ENCODE measurements at regions of chr11 and their contacts with region 1.

Region 1: DNA sequence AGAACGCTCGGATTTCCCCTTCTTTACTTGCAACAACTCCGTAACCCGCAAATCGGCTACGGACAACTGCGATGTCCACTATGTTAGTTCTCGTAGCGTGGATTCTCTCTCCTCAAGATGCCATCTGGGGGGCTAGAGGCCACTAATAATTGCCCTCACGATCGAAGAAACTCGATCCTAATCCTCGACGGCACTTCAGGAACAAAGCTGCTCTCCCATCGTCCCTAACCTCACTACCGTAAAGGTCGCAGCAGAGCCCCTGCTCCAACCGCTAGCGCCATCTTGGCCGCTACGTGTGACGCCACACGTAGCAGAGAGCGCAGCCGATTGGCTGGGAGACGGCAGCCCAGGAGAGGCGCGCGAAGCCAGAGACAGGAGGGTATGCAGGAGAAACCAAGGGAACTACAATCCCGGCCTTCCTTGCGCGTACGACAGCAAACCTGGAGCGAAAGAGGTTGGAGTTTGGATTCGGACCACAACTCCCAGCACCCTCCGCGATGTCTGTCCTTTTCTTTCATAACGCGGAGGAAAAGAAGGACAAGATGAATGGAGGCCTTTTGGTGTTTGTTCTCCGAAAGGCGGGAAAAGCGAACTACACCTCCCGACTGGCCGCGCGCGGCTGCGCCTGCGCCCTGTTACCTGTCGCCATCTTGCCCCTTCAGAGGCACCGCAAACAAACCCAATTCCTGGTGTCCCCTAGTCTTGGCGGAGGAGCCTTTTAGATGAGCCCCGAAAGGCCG is at the start of gene EMSY:
- DNase-seq: peak; percentile 95
- ATAC-seq: peak; percentile 94
- H3K4me3 Mint-ChIP-seq: peak within 1 kb of the TSS; percentile 96
- H3K27ac Mint-ChIP-seq: peak within 1 kb of the TSS; percentile 94
- H3K4me1 Mint-ChIP-seq: peaks cover 27% of the 10 kb centered on the region
- H3K27me3 Mint-ChIP-seq: no peaks in the 10 kb centered on the region
- total RNA-seq, gene EMSY: 28.5 to 35.4 TPM

Region 2: DNA sequence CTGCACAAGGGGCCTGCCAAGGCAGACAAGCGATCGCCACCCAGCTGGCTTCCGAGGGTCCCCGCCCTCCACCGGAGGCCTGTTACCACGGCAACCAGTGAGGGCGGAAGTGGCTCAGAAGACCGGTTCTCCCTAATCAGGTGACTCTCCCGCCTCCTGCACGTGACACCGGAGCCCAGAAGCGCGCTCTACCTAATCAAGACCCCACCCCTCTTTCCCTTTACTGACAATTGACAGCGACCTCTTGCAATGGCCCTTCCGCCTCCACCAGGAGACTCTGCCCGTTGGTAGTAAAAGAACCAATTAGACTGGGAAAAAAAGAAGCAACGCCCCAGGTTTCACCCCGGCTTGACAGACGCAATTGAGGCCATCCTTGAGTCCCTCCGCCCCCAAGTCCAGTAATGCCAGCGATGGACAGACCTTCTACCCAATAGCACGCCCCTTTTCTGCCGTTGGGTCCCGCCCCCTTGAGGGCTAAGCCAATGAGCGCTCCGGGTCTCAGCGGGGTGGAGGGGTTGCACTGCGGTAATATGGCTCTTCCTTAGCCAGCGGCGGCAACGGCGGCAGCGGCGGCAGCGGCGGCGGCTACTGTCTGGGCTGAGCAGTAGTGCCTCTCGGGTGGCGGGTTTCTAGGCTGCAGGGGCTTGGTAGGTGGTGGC is 629.7 kb before region 1 on chr11 and contains the start of gene UVRAG:
- CTCF ChIA-PET with region 1: no interaction called
- POLR2A ChIA-PET with region 1: no interaction called
- intact Hi-C with region 1: loop called in 1 of 2 experiments (anchors 1 kb)
- DNase-seq: peak; percentile 98
- ATAC-seq: peak; percentile 93
- H3K4me3 Mint-ChIP-seq: no peak within 1 kb of the TSS
- H3K27ac Mint-ChIP-seq: peak within 1 kb of the TSS; percentile 80
- H3K4me1 Mint-ChIP-seq: peaks cover 16% of the 10 kb centered on the region
- H3K27me3 Mint-ChIP-seq: no peaks in the 10 kb centered on the region
- total RNA-seq, gene UVRAG: 11.4 to 13.4 TPM

Region 3: GRCh38 chr11:76235233-76236091 is 209.1 kb before region 1 on chr11:
- CTCF ChIA-PET with region 1: interaction called, 3 read pairs
- POLR2A ChIA-PET with region 1: no interaction called
- intact Hi-C with region 1: loop called (anchors 1 kb)
- DNase-seq: peak; percentile 94
- ATAC-seq: peak; percentile 91
- H3K4me3 Mint-ChIP-seq: peak overlapping the region; percentile 83
- H3K27ac Mint-ChIP-seq: peak overlapping the region; percentile 94
- H3K4me1 Mint-ChIP-seq: peaks cover 49% of the 10 kb centered on the region
- H3K27me3 Mint-ChIP-seq: peaks cover 3% of the 10 kb centered on the region

Region 4: DNA sequence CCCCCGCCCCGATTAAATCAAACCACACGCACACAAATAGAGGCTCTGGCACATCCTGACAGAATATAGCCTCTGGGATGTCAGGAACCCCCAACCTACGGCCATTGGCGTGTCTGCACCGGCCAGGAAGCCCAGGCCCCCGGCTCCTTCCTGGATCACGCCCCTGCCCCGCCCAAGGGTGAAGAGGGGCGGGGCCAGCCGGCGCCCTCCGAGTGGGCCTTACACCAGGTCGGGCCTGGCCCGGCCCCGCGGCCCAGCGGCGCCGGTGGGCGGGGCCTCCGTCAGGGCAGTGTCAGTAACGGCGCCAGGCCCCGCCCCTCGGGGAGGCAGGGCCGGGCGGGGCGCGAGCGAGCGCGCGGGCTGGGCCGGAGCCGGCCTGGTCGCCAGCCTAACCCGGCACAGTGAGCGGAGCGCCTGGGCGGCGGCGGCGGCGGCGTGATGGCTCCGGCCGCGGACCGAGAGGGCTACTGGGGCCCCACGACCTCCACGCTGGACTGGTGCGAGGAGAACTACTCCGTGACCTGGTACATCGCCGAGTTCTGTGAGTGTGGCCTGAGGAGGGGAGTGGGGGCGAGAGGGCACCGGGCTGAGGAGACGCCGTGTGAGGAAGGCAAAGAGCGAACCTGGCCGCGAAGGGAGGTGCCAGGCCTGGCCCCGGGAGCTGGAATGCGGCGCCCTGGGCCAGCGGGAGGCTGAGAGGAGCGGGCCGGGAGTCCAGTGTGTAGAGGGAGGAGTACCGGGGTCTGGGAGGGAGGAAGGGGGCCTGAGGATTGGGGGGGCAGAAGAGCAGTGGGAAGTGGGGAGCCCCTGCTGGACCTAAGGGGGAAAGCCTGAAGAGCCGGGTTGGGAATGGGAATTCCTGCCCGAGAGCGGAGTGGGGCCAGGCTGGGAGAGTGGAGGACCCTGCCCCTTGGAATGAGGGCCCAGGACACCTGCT is 416.3 kb after region 1 on chr11 and contains the start of gene ACER3:
- CTCF ChIA-PET with region 1: interaction called, 3 read pairs
- POLR2A ChIA-PET with region 1: no interaction called
- intact Hi-C with region 1: loop called in 1 of 2 experiments (anchors 1 kb)
- DNase-seq: peak; percentile 94
- ATAC-seq: peak; percentile 99
- H3K4me3 Mint-ChIP-seq: peak within 1 kb of the TSS; percentile 72
- H3K27ac Mint-ChIP-seq: peak within 1 kb of the TSS; percentile 70
- H3K4me1 Mint-ChIP-seq: peaks cover 20% of the 10 kb centered on the region
- H3K27me3 Mint-ChIP-seq: no peaks in the 10 kb centered on the region
- total RNA-seq, gene ACER3: 8.9 to 10.3 TPM

Region 5: GRCh38 chr11:77387701-77388100 is 943.1 kb after region 1 on chr11:
- CTCF ChIA-PET with region 1: no interaction called
- POLR2A ChIA-PET with region 1: interaction called, 10 read pairs
- intact Hi-C with region 1: no loop called
- DNase-seq: no peak
- ATAC-seq: no peak
- H3K4me3 Mint-ChIP-seq: no peak overlapping the region
- H3K27ac Mint-ChIP-seq: no peak overlapping the region
- H3K4me1 Mint-ChIP-seq: no peaks in the 10 kb centered on the region
- H3K27me3 Mint-ChIP-seq: no peaks in the 10 kb centered on the region